ENCODE measurements at regions of chr9 and their contacts with region 1.

Region 1: DNA sequence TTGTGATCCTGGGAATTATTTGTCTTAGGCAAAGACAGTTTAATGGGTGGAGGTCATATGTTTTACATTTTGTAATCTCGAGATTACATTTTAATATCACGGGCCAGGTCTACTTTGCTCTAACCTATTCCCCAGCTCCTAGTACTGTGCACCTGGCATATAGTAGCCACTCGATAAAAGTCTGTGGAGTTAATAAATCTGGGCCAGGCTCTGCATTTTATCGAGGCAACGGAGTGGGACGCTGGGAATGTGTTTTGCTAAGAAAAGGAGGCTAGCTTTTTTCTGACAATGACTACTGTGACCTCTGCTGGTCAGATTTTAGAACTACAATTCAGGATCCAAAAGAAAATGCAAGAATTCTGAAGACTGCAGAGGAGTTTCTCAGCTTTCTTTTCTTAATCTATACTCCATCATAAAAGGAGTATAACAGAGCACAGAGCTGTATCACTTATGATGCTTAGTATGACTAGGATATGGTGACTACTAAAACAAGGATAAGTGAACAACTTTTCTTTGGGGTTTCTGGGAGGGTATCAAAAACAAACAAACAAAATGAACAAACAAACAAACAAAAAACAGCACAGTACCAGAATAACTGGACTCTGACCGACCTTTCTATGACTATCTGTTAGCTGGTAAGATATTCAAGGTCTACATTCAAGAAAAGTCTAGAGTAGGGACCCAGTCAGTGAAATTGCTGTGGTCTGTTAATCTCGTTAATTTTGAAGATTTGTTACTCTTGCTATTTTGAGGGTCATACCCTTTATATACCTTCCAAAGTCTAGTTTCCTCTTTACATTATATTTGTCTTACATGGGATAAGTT is 46.1 kb upstream of the CER1 start:
- DNase-seq: peak; percentile 44
- H3K4me3 ChIP-seq: no peak overlapping the region; a peak in 1 of 4 replicates
- H3K27ac ChIP-seq: no peak overlapping the region; a peak in 1 of 4 replicates
- H3K4me1 ChIP-seq: peaks cover 0 to 6% of the 10 kb centered on the region in 2 experiments; a peak in 1 of 4 replicates
- H3K27me3 ChIP-seq: no peaks in the 10 kb centered on the region
- CTCF ChIP-seq: peak; percentile 77
- EP300 ChIP-seq: no peak
- RAD21 ChIP-seq: peak; percentile 88

Region 2: DNA sequence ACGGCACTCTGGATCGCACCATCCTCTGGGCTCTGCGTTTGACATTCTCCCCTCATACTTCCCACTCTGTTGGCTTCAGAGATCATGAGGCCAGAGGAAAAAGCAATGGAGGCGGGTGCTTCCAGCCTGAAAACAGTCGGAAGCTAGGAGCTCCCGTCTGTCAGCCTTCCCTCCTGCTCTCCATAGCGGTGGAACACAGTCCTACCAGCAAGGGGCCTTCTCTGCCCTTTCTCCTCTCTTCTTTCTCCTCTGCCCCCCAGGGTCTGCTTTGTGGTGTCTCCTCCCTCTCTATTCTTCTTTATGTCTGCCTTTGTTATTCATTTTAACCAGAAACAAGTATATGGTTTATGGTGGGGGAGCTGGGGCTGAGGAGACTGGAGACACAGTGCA is 302.2 kb before region 1 on chr9:
- CTCF ChIA-PET with region 1: interaction called, 11 read pairs
- POLR2A ChIA-PET with region 1: no interaction called
- DNase-seq: no peak
- H3K4me3 ChIP-seq: no peak overlapping the region
- H3K27ac ChIP-seq: no peak overlapping the region
- H3K4me1 ChIP-seq: peaks cover 0 to 4% of the 10 kb centered on the region in 2 experiments; a peak in 1 of 4 replicates
- H3K27me3 ChIP-seq: no peaks in the 10 kb centered on the region
- CTCF ChIP-seq: no peak
- EP300 ChIP-seq: no peak
- RAD21 ChIP-seq: no peak

Region 3: GRCh38 chr9:14687042-14687719 is 81.4 kb before region 1 on chr9:
- CTCF ChIA-PET with region 1: interaction called, 21 read pairs
- POLR2A ChIA-PET with region 1: no interaction called
- DNase-seq: no peak
- H3K4me3 ChIP-seq: no peak overlapping the region; a peak in 1 of 4 replicates
- H3K27ac ChIP-seq: peak overlapping the region in 1 of 2 experiments; percentile 63; a peak in 2 of 4 replicates
- H3K4me1 ChIP-seq: peaks cover 5 to 11% of the 10 kb centered on the region in 2 experiments; a peak in 2 of 4 replicates
- H3K27me3 ChIP-seq: no peaks in the 10 kb centered on the region
- CTCF ChIP-seq: no peak
- EP300 ChIP-seq: no peak
- RAD21 ChIP-seq: no peak

Region 4: GRCh38 chr9:14741369-14741768 is 27.2 kb before region 1 on chr9:
- CTCF ChIA-PET with region 1: interaction called, 10 read pairs
- POLR2A ChIA-PET with region 1: no interaction called
- DNase-seq: no peak
- H3K4me3 ChIP-seq: no peak overlapping the region
- H3K27ac ChIP-seq: peak overlapping the region in 1 of 2 experiments; percentile 34; a peak in 1 of 4 replicates
- H3K4me1 ChIP-seq: peaks cover 0 to 3% of the 10 kb centered on the region in 2 experiments; a peak in 2 of 4 replicates
- H3K27me3 ChIP-seq: no peaks in the 10 kb centered on the region
- CTCF ChIP-seq: no peak
- EP300 ChIP-seq: no peak
- RAD21 ChIP-seq: no peak

Region 5: GRCh38 chr9:14779566-14780022 is 11.0 kb after region 1 on chr9:
- CTCF ChIA-PET with region 1: interaction called, 16 read pairs
- POLR2A ChIA-PET with region 1: no interaction called
- DNase-seq: no peak
- H3K4me3 ChIP-seq: no peak overlapping the region
- H3K27ac ChIP-seq: no peak overlapping the region; a peak in 1 of 4 replicates
- H3K4me1 ChIP-seq: peaks cover 0 to 2% of the 10 kb centered on the region in 2 experiments; a peak in 1 of 4 replicates
- H3K27me3 ChIP-seq: no peaks in the 10 kb centered on the region
- CTCF ChIP-seq: no peak
- EP300 ChIP-seq: no peak
- RAD21 ChIP-seq: no peak

Region 6: DNA sequence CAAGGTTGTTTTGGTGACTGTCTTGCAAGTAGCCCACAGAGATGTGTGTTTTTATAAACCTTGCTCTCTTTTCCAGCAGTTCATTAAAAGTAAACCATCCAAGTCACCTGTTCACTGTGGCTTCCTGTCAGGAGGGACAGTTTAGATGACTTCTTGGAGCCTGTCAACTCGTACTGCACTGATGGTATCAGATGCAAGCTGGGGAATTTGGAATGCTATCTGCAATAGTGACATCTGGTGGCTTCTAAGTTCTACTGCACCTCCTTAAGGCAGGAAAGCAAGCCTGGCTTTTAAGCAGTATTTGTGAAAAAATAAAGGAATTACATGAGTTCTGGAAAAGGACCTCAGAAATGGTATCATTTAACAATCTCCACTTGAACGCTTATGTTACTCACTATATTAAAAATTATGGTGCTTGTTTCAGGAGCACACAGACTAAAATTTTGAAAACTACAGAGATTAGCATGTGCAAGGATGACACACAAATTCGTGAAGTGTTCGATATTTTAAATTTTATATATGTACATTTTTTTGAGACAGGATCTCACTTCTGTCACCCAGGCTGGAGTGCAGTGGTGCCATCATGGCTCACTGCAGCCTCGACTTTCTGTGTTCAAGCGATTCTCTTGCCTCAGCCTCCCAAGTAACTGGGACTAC is 374.4 kb after region 1 on chr9:
- CTCF ChIA-PET with region 1: interaction called, 11 read pairs
- POLR2A ChIA-PET with region 1: no interaction called
- DNase-seq: peak; percentile 71
- H3K4me3 ChIP-seq: no peak overlapping the region
- H3K27ac ChIP-seq: no peak overlapping the region
- H3K4me1 ChIP-seq: no peaks in the 10 kb centered on the region
- H3K27me3 ChIP-seq: no peaks in the 10 kb centered on the region; the same call in 1 of the 2 replicates
- CTCF ChIP-seq: peak; percentile 85
- EP300 ChIP-seq: no peak
- RAD21 ChIP-seq: peak; percentile 82